Activated CD8-positive, alpha-beta T cell treated with anti-CD3 and anti-CD28 coated beads for 36 hours (primary cell): ENCODE measurements at regions of chr11 and their contacts with region 1.

Region 1: DNA sequence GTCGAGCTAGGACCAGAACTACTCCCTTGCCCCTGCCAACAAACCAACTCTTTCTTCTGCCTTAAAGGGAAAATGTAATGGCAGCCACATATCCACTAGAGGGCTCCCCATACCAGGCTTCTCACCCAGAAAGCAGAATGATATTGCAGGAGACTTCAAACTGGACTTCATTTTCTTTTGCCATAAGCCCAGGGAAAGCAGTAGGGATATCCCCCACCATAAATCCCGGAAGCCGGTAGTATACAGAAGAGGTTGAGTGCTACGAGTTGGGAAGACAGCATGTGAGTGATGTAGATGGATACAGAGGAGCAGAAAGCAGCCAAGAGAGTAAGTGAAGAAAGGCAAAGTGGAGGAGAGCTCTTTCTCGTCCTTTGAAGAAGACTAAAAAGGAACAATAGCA is 12.1 kb downstream of the PLAAT5 start:
- DNase-seq: peak; percentile 57
- ATAC-seq: peak; percentile 86
- H3K4me3 Mint-ChIP-seq: no peak overlapping the region
- H3K27ac Mint-ChIP-seq: no peak overlapping the region
- H3K4me1 Mint-ChIP-seq: no peaks in the 10 kb centered on the region
- H3K27me3 Mint-ChIP-seq: no peaks in the 10 kb centered on the region
- CTCF ChIP-seq: peak; percentile 85

Region 2: DNA sequence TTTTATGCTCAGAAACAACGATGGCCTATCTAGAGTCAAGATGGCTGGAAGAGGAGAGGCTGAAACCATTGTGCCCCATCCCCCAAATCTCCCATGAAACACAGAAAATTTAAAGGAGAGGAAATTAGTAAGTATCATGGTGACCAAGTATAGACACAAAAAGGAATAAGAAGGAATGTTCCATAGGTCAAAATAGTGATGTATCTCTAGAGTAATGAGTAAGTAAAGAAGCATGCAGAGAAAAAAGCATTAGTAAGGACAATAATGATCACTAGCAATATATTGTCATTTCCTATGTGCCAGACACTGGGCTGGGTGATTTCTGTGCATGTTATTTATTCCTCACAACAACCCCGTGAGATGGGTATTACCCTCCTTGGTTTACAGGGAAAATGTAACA is 332.3 kb before region 1 on chr11:
- CTCF ChIA-PET with region 1: no interaction called
- POLR2A ChIA-PET with region 1: no interaction called
- intact Hi-C with region 1: no loop called
- DNase-seq: no peak
- ATAC-seq: no peak
- H3K4me3 Mint-ChIP-seq: no peak overlapping the region
- H3K27ac Mint-ChIP-seq: no peak overlapping the region
- H3K4me1 Mint-ChIP-seq: no peaks in the 10 kb centered on the region
- H3K27me3 Mint-ChIP-seq: peaks cover 8% of the 10 kb centered on the region
- CTCF ChIP-seq: no peak

Region 3: GRCh38 chr11:63490551-63491239 is 11.8 kb after region 1 on chr11 and contains the start of gene PLAAT5:
- CTCF ChIA-PET with region 1: interaction called, 47 read pairs
- POLR2A ChIA-PET with region 1: no interaction called
- intact Hi-C with region 1: no loop called
- DNase-seq: peak; percentile 21
- ATAC-seq: peak; percentile 56
- H3K4me3 Mint-ChIP-seq: peak within 1 kb of the TSS; percentile 74
- H3K27ac Mint-ChIP-seq: no peak within 1 kb of the TSS
- H3K4me1 Mint-ChIP-seq: peaks cover 9% of the 10 kb centered on the region
- H3K27me3 Mint-ChIP-seq: peaks cover 20% of the 10 kb centered on the region
- CTCF ChIP-seq: no peak
- total RNA-seq, gene PLAAT5: 0.16 to 0.29 TPM

Region 4: DNA sequence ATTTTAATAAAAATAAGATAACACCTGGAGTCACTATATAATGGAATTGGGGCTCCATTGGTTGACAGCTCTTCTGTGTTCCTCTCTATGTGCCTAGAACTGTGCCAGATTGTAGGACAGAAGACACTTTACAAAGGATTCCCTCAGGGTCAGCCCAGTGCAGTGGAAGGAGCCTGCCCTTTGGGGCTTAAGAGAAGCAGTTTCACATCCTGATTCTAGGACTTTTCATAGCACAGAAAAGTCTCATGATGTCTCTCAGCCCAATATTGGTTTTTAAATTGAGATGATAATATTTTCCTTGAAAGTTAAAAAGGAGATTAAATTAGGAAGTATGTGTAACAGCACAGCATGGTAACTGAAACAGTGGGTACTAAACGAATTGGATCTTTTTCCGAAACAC is 64.8 kb after region 1 on chr11:
- CTCF ChIA-PET with region 1: interaction called, 12 read pairs
- POLR2A ChIA-PET with region 1: no interaction called
- intact Hi-C with region 1: no loop called
- DNase-seq: no peak
- ATAC-seq: no peak
- H3K4me3 Mint-ChIP-seq: no peak overlapping the region
- H3K27ac Mint-ChIP-seq: no peak overlapping the region
- H3K4me1 Mint-ChIP-seq: peaks cover 26% of the 10 kb centered on the region
- H3K27me3 Mint-ChIP-seq: no peaks in the 10 kb centered on the region
- CTCF ChIP-seq: no peak

Region 5: DNA sequence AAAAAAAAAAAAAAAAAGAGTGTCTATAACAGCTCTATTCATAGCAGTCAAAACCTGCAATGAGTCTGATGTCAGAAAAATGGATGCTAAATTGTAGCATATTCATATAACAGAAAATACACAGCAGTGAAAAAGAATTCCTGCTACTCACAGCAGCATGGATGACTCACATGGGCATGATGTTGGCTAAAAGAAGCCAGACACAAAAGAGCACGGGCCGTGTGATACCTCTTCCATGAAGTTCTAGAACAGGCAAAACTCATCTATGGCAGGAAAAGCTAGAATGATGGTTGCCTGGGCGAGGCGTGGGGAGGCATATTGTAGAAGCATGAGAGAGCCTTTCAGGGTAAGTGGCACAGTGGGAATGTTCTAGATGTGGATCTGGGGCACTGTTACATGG is 116.4 kb after region 1 on chr11:
- CTCF ChIA-PET with region 1: no interaction called
- POLR2A ChIA-PET with region 1: no interaction called
- intact Hi-C with region 1: no loop called
- DNase-seq: no peak
- ATAC-seq: no peak
- H3K4me3 Mint-ChIP-seq: no peak overlapping the region
- H3K27ac Mint-ChIP-seq: no peak overlapping the region
- H3K4me1 Mint-ChIP-seq: no peaks in the 10 kb centered on the region
- H3K27me3 Mint-ChIP-seq: no peaks in the 10 kb centered on the region
- CTCF ChIP-seq: no peak

Region 6: DNA sequence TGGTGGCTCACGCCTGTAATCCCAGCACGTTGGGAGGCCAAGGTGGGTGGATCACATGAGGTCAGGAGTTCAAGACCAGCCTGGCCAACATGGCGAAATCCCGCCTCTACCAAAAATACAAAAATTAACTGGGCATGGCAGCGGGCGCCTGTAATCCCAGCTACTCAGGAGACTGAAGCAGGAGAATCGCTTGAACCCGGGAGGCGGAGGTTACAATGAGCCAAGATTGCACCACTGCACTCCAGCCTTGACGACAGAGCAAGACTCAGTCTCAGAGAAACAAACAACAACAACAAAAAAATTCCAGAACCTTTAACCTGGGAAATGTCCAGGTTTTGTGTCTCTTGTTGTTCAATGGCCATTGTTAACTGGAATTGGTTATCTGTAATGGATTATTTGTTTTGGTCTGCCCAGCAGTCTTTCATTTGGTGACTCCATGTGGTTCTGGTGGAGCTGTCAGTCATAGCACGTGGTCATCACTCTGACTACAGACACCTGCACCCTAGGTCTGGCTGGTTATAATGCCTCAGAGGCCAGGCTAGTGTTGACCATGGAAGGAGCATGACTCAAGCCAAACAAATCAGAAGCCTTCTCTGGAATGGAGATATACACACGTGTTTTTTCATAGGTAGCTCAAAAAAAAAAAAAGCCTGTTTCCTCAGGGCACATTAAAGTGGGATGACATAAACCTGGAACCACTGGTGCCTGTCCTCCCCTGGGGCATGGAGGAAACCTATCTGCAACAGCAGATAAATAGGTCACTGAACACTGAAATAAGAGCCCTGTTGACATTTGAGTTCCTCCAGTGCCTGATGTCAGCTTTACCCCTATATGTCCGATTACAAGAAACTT is 143.3 kb after region 1 on chr11:
- CTCF ChIA-PET with region 1: interaction called, 55 read pairs
- POLR2A ChIA-PET with region 1: no interaction called
- intact Hi-C with region 1: no loop called
- DNase-seq: no peak
- ATAC-seq: no peak
- H3K4me3 Mint-ChIP-seq: no peak overlapping the region
- H3K27ac Mint-ChIP-seq: no peak overlapping the region
- H3K4me1 Mint-ChIP-seq: peaks cover 7% of the 10 kb centered on the region
- H3K27me3 Mint-ChIP-seq: no peaks in the 10 kb centered on the region
- CTCF ChIP-seq: no peak

Region 7: GRCh38 chr11:63635762-63636465 is 157.0 kb after region 1 on chr11:
- CTCF ChIA-PET with region 1: interaction called, 150 read pairs
- POLR2A ChIA-PET with region 1: interaction called, 4 read pairs
- intact Hi-C with region 1: loop called (anchors 2 kb)
- DNase-seq: peak; percentile 76
- ATAC-seq: peak; percentile 83
- H3K4me3 Mint-ChIP-seq: no peak overlapping the region
- H3K27ac Mint-ChIP-seq: no peak overlapping the region
- H3K4me1 Mint-ChIP-seq: peaks cover 11% of the 10 kb centered on the region
- H3K27me3 Mint-ChIP-seq: no peaks in the 10 kb centered on the region
- CTCF ChIP-seq: peak; percentile 86

Region 8: GRCh38 chr11:63738720-63739360 is 259.9 kb after region 1 on chr11:
- CTCF ChIA-PET with region 1: interaction called, 34 read pairs
- POLR2A ChIA-PET with region 1: no interaction called
- intact Hi-C with region 1: loop called (anchors 10 kb)
- DNase-seq: peak; percentile 86
- ATAC-seq: peak; percentile 47
- H3K4me3 Mint-ChIP-seq: no peak overlapping the region
- H3K27ac Mint-ChIP-seq: peak overlapping the region; percentile 46
- H3K4me1 Mint-ChIP-seq: peaks cover 6% of the 10 kb centered on the region
- H3K27me3 Mint-ChIP-seq: no peaks in the 10 kb centered on the region
- CTCF ChIP-seq: peak; percentile 99